ENCODE measurements at regions of chr4 and their contacts with region 1.

Region 1: GRCh38 chr4:38872604-38873006 is 5.0 kb downstream of the FAM114A1 start:
- DNase-seq: peak in 1 of 2 experiments; percentile 80
- ATAC-seq: peak; percentile 63 to 80; a peak in 5 of 6 replicates
- H3K4me3 ChIP-seq: no peak overlapping the region
- H3K27ac ChIP-seq: peak overlapping the region; percentile 22 to 46; a peak in 4 of 6 replicates
- H3K4me1 ChIP-seq: peaks cover 25% of the 10 kb centered on the region
- CTCF ChIP-seq: no peak
- EP300 ChIP-seq: no peak
- POLR2A ChIP-seq: no peak
- RAD21 ChIP-seq: no peak

Region 2: GRCh38 chr4:38703635-38704034 is 169.0 kb before region 1 on chr4:
- CTCF ChIA-PET with region 1: no interaction called
- POLR2A ChIA-PET with region 1: no interaction called
- DNase-seq: no peak
- ATAC-seq: peak in 1 of 2 experiments; percentile 34; a peak in 2 of 6 replicates
- H3K4me3 ChIP-seq: no peak overlapping the region
- H3K27ac ChIP-seq: no peak overlapping the region
- H3K4me1 ChIP-seq: no peaks in the 10 kb centered on the region
- CTCF ChIP-seq: no peak
- EP300 ChIP-seq: no peak
- POLR2A ChIP-seq: no peak
- RAD21 ChIP-seq: no peak

Region 3: DNA sequence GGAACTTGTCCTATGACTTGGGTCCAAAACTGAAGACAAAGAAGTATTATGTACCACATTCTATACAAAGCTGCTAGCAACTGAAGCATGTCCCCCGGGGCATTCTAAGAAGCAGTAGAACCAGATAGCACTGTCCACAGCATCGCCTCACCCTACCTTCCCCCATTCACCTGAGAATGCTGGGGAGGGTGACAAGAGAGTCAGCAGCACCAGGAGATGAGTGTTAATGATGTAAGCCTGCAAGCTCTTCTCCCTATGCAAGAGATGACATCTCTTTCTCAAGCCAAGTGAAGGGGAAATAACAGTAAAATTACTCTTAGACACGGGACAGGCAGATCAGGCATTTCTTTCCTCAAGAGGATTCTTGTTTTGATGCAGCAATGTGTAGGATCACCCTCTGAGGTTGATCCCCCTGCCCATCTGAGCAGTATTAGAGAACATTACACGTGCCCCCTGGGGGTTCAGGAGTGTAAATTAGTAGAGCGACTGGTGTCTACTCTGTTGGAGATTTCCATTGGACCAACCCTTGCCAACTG is 54.1 kb before region 1 on chr4:
- CTCF ChIA-PET with region 1: no interaction called
- POLR2A ChIA-PET with region 1: no interaction called
- DNase-seq: no peak
- ATAC-seq: no peak
- H3K4me3 ChIP-seq: no peak overlapping the region
- H3K27ac ChIP-seq: no peak overlapping the region
- H3K4me1 ChIP-seq: no peaks in the 10 kb centered on the region
- CTCF ChIP-seq: no peak
- EP300 ChIP-seq: no peak
- POLR2A ChIP-seq: no peak
- RAD21 ChIP-seq: no peak

Region 4: GRCh38 chr4:38860788-38861424 is 11.7 kb before region 1 on chr4:
- CTCF ChIA-PET with region 1: interaction called, 12 read pairs
- POLR2A ChIA-PET with region 1: no interaction called
- DNase-seq: peak; percentile 42 to 70
- ATAC-seq: peak; percentile 48 to 73; a peak in 3 of 6 replicates
- H3K4me3 ChIP-seq: no peak overlapping the region
- H3K27ac ChIP-seq: no peak overlapping the region
- H3K4me1 ChIP-seq: peaks cover 14% of the 10 kb centered on the region
- CTCF ChIP-seq: peak; percentile 58
- EP300 ChIP-seq: no peak
- POLR2A ChIP-seq: no peak
- RAD21 ChIP-seq: no peak

Region 5: GRCh38 chr4:38902695-38903094 is 30.1 kb after region 1 on chr4:
- CTCF ChIA-PET with region 1: no interaction called
- POLR2A ChIA-PET with region 1: no interaction called
- DNase-seq: peak; percentile 13 to 44
- ATAC-seq: peak; percentile 81 to 83
- H3K4me3 ChIP-seq: no peak overlapping the region
- H3K27ac ChIP-seq: no peak overlapping the region
- H3K4me1 ChIP-seq: peaks cover 23% of the 10 kb centered on the region
- CTCF ChIP-seq: peak; percentile 49
- EP300 ChIP-seq: no peak
- POLR2A ChIP-seq: no peak
- RAD21 ChIP-seq: peak; percentile 70 to 71

Region 6: DNA sequence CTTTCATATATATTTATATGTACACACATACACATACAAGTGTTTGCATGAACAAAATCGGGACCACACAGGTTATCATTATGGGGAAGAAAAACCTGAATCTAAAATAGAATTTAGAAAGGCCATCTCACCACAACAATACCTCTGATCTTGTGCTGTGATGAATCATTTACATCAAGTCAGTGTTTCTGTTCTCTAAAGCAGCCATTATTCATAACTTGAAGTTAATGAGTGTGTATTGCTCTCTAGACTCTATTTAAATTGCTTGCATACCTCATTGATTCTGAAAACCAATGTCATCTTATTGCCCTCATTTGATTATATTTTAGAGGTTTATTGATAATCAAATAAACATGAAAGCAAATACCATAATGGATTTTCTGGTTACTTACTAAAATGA is 66.6 kb after region 1 on chr4:
- CTCF ChIA-PET with region 1: no interaction called
- POLR2A ChIA-PET with region 1: no interaction called
- DNase-seq: no peak
- ATAC-seq: no peak
- H3K4me3 ChIP-seq: no peak overlapping the region
- H3K27ac ChIP-seq: no peak overlapping the region
- H3K4me1 ChIP-seq: no peaks in the 10 kb centered on the region
- CTCF ChIP-seq: no peak
- EP300 ChIP-seq: no peak
- POLR2A ChIP-seq: no peak
- RAD21 ChIP-seq: no peak